Psoas muscle (tissue), 8 donors: ENCODE measurements at regions of chr4 and their contacts with region 1.

Region 1: GRCh38 chr4:123380728-123381716 is 15.6 kb upstream of the SPRY1 start:
- DNase-seq: no peak
- ATAC-seq: no peak
- H3K4me3 ChIP-seq: no peak overlapping the region
- H3K27ac ChIP-seq: no peak overlapping the region
- H3K4me1 ChIP-seq: peaks cover 1% of the 10 kb centered on the region
- H3K27me3 ChIP-seq: no peaks in the 10 kb centered on the region
- CTCF ChIP-seq: no peak

Region 2: GRCh38 chr4:123133397-123134050 is 247.5 kb before region 1 on chr4:
- intact Hi-C with region 1: loop called in 1 of 2 experiments (anchors 10 kb)
- DNase-seq: no peak
- ATAC-seq: no peak
- H3K4me3 ChIP-seq: no peak overlapping the region
- H3K27ac ChIP-seq: no peak overlapping the region
- H3K4me1 ChIP-seq: no peaks in the 10 kb centered on the region
- H3K27me3 ChIP-seq: no peaks in the 10 kb centered on the region
- CTCF ChIP-seq: no peak

Region 3: GRCh38 chr4:123363729-123364128 is 17.3 kb before region 1 on chr4:
- intact Hi-C with region 1: loop called in 1 of 2 experiments (anchors 1 kb)
- DNase-seq: no peak
- ATAC-seq: no peak
- H3K4me3 ChIP-seq: no peak overlapping the region
- H3K27ac ChIP-seq: no peak overlapping the region
- H3K4me1 ChIP-seq: peaks cover 22% of the 10 kb centered on the region
- H3K27me3 ChIP-seq: no peaks in the 10 kb centered on the region
- CTCF ChIP-seq: no peak

Region 4: DNA sequence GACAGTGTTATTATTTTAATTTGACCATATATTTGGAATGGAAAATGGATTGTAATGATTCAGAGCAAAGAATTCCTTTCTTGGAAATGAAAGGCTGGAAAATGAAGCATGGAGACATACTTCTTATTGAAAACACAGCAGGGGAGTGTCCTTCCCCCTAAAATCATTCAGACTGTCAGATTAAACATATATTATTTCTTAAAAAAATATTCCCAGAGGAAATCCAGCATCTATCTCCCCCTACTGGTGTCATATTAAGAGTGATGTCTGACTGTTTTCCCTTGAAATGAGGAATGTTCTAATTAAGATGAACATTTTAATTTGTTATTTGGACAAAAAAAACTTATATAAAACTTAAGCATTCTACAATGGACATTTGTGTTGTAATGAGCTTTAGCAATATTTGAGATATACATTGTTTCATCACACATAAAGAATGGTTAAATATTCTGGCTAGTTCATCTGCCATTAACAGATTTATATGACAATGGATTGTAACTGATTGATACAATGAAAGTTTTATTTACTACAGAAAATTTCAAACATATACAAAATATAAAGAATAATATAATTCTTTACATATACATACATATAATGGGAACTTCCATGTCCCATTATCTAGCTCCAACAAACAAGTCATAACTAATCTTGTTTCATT is 280.2 kb after region 1 on chr4:
- intact Hi-C with region 1: no loop called
- DNase-seq: no peak
- ATAC-seq: peak in 1 of 4 donors; percentile 56
- H3K4me3 ChIP-seq: no peak overlapping the region
- H3K27ac ChIP-seq: no peak overlapping the region
- H3K4me1 ChIP-seq: peaks cover 6% of the 10 kb centered on the region
- H3K27me3 ChIP-seq: no peaks in the 10 kb centered on the region
- CTCF ChIP-seq: peak; percentile 64